GM12878 (cell line): ENCODE measurements at regions of chr16 and their contacts with region 1.

Region 1: GRCh38 chr16:22278441-22279236 is 18.6 kb upstream of the POLR3E start:
- DNase-seq: no peak
- ATAC-seq: no peak
- H3K4me3 ChIP-seq: no peak overlapping the region
- H3K27ac ChIP-seq: no peak overlapping the region
- H3K4me1 ChIP-seq: no peaks in the 10 kb centered on the region
- H3K27me3 ChIP-seq: no peaks in the 10 kb centered on the region
- CTCF ChIP-seq: no peak
- EP300 ChIP-seq: no peak
- POLR2A ChIP-seq: no peak
- RAD21 ChIP-seq: no peak

Region 2: GRCh38 chr16:22144520-22144919 is 134.1 kb before region 1 on chr16:
- CTCF ChIA-PET with region 1: no interaction called
- POLR2A ChIA-PET with region 1: no interaction called
- RAD21 ChIA-PET with region 1: no interaction called
- SMC1A ChIA-PET with region 1: no interaction called
- in situ Hi-C with region 1: no loop called
- intact Hi-C with region 1: no loop called
- DNase-seq: no peak
- ATAC-seq: no peak
- H3K4me3 ChIP-seq: no peak overlapping the region
- H3K27ac ChIP-seq: no peak overlapping the region
- H3K4me1 ChIP-seq: no peaks in the 10 kb centered on the region
- H3K27me3 ChIP-seq: peaks cover 0 to 3% of the 10 kb centered on the region in 2 experiments; a peak in 1 of 4 replicates
- CTCF ChIP-seq: no peak
- EP300 ChIP-seq: no peak
- POLR2A ChIP-seq: no peak
- RAD21 ChIP-seq: no peak

Region 3: GRCh38 chr16:22232277-22233042 is 46.2 kb before region 1 on chr16:
- CTCF ChIA-PET with region 1: no interaction called
- POLR2A ChIA-PET with region 1: interaction called, 10 read pairs
- RAD21 ChIA-PET with region 1: no interaction called
- SMC1A ChIA-PET with region 1: no interaction called
- in situ Hi-C with region 1: no loop called
- intact Hi-C with region 1: no loop called
- DNase-seq: no peak
- ATAC-seq: no peak
- H3K4me3 ChIP-seq: no peak overlapping the region
- H3K27ac ChIP-seq: no peak overlapping the region
- H3K4me1 ChIP-seq: no peaks in the 10 kb centered on the region
- H3K27me3 ChIP-seq: no peaks in the 10 kb centered on the region
- CTCF ChIP-seq: no peak
- EP300 ChIP-seq: no peak
- POLR2A ChIP-seq: no peak
- RAD21 ChIP-seq: no peak

Region 4: GRCh38 chr16:22307838-22308237 is 29.2 kb after region 1 on chr16:
- CTCF ChIA-PET with region 1: no interaction called
- POLR2A ChIA-PET with region 1: no interaction called
- RAD21 ChIA-PET with region 1: no interaction called
- SMC1A ChIA-PET with region 1: no interaction called
- in situ Hi-C with region 1: no loop called
- intact Hi-C with region 1: no loop called
- DNase-seq: no peak
- ATAC-seq: no peak
- H3K4me3 ChIP-seq: no peak overlapping the region
- H3K27ac ChIP-seq: no peak overlapping the region
- H3K4me1 ChIP-seq: no peaks in the 10 kb centered on the region
- H3K27me3 ChIP-seq: no peaks in the 10 kb centered on the region
- CTCF ChIP-seq: no peak
- EP300 ChIP-seq: no peak
- POLR2A ChIP-seq: no peak
- RAD21 ChIP-seq: no peak